PC-9 (cell line): ENCODE measurements at regions of chr17 and their contacts with region 1.

Region 1: DNA sequence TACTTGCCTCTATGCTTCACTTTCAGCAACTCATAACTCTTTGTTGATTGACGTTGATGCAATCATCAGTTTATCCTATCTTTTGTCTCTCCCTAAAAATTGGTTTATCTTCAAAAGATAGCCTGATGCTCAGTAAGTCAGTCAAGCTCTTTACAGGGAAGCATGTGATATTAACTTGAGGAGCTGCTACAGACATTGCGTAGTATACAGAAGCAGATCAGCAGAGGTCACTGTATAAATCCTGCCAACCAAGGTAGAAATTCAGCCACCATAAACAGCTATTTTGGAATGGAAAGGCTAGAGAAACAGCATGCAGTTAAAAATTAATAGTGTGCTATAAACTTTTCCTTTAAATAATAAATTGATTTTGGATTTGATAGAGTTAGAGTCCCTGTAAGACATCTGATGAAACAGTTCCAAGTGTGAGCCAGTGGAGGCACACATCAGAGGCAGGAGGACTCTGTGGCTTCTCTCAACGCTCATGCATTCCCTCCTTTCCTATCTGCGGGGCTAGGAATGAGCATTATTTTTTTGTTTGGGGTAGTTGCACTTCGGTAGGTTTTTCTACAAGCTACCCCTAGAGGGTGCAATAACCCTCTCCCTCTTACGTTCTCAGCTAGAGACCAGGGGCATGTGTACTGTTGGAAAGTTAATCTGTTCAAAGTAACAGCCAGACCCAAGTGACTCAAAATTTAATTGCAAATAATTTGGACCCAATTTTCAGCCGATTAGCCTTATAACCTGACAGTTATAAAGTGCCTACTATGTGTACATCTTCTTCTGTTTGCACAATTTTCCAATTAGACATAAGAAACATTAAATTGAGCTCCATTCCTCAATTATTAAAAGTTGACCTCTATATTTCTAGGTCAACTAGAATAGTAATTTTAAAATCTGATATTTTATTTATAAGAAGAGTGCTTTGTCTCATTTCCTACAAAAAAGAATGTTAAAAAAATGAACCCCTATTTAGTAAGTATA is 647.7 kb upstream of the SOX9 start:
- DNase-seq: peak; percentile 18 to 45
- H3K4me3 ChIP-seq: no peak overlapping the region
- H3K27ac ChIP-seq: no peak overlapping the region
- H3K4me1 ChIP-seq: no peaks in the 10 kb centered on the region
- H3K27me3 ChIP-seq: no peaks in the 10 kb centered on the region
- CTCF ChIP-seq: peak; percentile 76

Region 2: DNA sequence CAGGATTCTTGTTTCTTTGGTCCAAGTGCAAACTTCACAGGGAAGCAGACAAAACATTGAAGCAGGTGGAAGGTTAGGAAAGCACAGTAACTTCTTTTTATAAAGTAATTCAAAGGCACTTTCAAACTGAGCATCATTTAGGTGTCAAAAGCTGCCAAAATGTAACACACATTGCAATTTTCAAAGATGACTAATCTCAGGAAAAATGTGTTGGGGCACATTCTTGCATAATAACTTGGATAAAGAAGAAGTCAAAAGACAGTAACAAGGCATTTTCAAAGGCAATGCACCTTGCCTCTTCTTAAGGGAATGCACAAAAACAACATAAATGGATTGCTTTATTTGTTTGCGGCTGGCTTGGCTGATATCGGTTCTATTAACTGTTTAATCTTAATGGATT is 1300.2 kb before region 1 on chr17:
- CTCF ChIA-PET with region 1: no interaction called
- POLR2A ChIA-PET with region 1: no interaction called
- intact Hi-C with region 1: no loop called
- DNase-seq: peak in 1 of 2 experiments; percentile 39
- H3K4me3 ChIP-seq: no peak overlapping the region
- H3K27ac ChIP-seq: no peak overlapping the region
- H3K4me1 ChIP-seq: peaks cover 15% of the 10 kb centered on the region
- H3K27me3 ChIP-seq: peaks cover 11% of the 10 kb centered on the region; the same call in 1 of the 2 replicates
- CTCF ChIP-seq: no peak

Region 3: GRCh38 chr17:71118039-71118438 is 355.1 kb before region 1 on chr17:
- CTCF ChIA-PET with region 1: no interaction called
- POLR2A ChIA-PET with region 1: no interaction called
- intact Hi-C with region 1: loop called (anchors 1 kb)
- DNase-seq: peak in 1 of 2 experiments; percentile 27
- H3K4me3 ChIP-seq: no peak overlapping the region
- H3K27ac ChIP-seq: no peak overlapping the region
- H3K4me1 ChIP-seq: 0 out of 2 replicates have a peak, but pooled peaks cover 3% of the 10 kb centered on the region
- H3K27me3 ChIP-seq: no peaks in the 10 kb centered on the region
- CTCF ChIP-seq: peak; percentile 69

Region 4: DNA sequence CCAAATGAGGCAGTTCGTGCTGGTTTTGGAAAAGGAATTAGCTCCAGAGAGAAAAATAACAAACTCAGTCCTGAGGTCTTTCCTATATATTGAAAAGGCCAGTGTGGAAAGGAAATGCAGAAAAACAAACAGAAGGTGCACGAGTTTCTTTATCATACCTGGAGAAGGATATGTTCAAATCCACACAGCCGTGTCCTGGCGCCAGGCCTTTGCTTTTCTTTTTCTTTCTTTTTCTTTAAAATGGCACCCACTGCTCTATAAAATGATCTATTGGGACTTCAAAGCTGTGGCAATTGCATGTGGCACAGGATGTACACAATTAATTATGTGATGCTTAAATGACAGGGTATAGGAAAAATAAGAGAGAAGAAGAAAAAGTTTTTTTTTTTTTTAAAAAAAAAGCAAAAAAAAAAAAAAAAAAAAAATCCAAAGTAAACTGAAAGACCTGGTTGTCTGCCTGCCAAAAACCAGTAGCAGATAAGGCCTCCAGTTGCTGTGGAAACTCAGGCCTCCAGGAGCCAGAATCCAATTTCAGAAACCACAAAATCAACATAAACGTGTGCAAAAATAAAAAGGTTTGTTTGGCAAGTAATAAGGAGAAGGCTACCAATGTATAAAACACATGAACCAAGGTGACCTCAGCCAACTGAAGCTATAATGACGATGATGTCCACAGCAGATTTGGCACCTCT is 309.8 kb before region 1 on chr17:
- CTCF ChIA-PET with region 1: no interaction called
- POLR2A ChIA-PET with region 1: interaction called, 16 read pairs
- intact Hi-C with region 1: no loop called
- DNase-seq: peak; percentile 52 to 85
- H3K4me3 ChIP-seq: no peak overlapping the region
- H3K27ac ChIP-seq: no peak overlapping the region
- H3K4me1 ChIP-seq: no peaks in the 10 kb centered on the region
- H3K27me3 ChIP-seq: no peaks in the 10 kb centered on the region
- CTCF ChIP-seq: no peak

Region 5: GRCh38 chr17:71970312-71970711 is 497.2 kb after region 1 on chr17:
- CTCF ChIA-PET with region 1: no interaction called
- POLR2A ChIA-PET with region 1: no interaction called
- intact Hi-C with region 1: loop called (anchors 10 kb)
- DNase-seq: peak; percentile 45 to 89
- H3K4me3 ChIP-seq: no peak overlapping the region
- H3K27ac ChIP-seq: peak overlapping the region; percentile 73
- H3K4me1 ChIP-seq: peaks cover 23% of the 10 kb centered on the region
- H3K27me3 ChIP-seq: no peaks in the 10 kb centered on the region
- CTCF ChIP-seq: no peak

Region 6: DNA sequence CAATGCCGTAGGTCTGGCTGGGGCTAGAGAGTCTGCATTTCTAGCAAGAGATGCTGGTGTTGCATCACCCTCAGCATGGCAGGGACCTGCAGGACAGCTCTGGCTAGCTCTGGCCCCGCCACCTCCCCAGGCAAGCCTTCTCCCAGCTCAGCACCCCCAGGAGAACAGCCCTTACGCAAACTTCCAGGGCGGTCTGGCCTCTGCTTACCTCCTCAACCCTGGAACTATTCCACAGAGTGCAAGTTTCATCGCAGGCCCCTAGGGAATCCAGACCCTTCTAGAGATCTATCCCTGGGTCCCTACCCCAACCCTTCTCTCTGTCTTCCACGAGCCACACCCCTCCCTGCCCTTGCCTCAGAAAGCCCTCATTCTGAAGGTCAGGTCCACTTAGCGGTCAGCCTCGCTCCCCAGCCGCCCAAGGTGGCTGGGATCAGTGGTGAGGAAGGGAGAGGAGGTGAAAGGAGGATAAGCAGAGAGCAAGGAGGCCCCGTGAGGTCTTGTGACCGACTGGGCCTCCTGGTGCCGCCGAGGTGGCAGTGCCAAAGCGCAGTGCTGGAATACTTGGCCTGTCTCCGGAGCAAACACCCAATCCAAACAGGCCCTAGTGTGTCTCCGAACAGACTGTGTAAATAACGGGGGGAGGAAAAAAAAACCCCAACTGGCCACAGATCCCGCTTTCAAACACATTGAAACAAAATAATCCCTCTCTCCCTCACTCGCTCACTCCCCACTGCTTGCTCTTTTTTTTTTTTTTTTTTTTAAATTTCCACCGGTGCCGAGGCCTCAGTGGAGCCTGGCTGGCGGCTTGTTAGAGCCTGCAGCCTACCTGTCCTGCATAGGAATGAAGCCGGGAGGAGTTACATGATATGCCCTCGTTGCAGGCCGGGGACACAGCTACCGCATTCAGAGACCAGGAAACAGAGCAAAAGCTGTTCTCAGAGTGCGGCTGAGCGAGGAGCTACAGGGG is 1028.6 kb after region 1 on chr17:
- CTCF ChIA-PET with region 1: interaction called, 15 read pairs
- POLR2A ChIA-PET with region 1: no interaction called
- intact Hi-C with region 1: no loop called
- DNase-seq: no peak
- H3K4me3 ChIP-seq: no peak overlapping the region
- H3K27ac ChIP-seq: peak overlapping the region; percentile 42; the same call in 1 of the 2 replicates
- H3K4me1 ChIP-seq: peaks cover 26% of the 10 kb centered on the region
- H3K27me3 ChIP-seq: no peaks in the 10 kb centered on the region
- CTCF ChIP-seq: no peak